ENCODE measurements at regions of chr19 and their contacts with region 1.

Region 1: DNA sequence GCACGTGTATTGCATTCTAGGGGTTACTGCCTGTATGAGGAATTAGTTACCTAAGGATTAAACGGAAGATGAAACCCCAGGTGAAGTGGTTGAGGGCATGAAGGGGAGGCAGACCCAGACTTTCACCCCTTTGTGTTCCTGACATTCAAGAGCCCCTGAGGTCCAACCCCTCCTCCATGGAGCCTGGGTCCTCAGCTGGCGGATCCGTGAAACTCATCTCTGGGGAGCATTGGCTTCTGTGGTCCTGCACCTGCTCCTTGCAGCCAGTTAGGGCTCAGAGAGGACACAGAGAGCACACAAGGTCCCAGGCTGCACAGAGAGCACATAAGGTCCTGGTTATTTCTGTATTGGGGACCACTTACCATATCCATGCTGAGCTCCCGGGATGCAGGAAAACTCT is 7.0 kb upstream of the LILRA1 start:
- DNase-seq: no peak
- H3K4me3 ChIP-seq: no peak overlapping the region
- H3K27ac ChIP-seq: no peak overlapping the region
- H3K4me1 ChIP-seq: no peaks in the 10 kb centered on the region
- H3K27me3 ChIP-seq: no peaks in the 10 kb centered on the region
- CTCF ChIP-seq: no peak
- POLR2A ChIP-seq: no peak

Region 2: GRCh38 chr19:54281007-54281728 is 305.2 kb before region 1 on chr19 and contains the start of gene LILRB2:
- intact Hi-C with region 1: loop called (anchors 5 kb)
- DNase-seq: no peak
- H3K4me3 ChIP-seq: no peak within 1 kb of the TSS
- H3K27ac ChIP-seq: no peak within 1 kb of the TSS
- H3K4me1 ChIP-seq: no peaks in the 10 kb centered on the region
- H3K27me3 ChIP-seq: no peaks in the 10 kb centered on the region
- CTCF ChIP-seq: no peak
- POLR2A ChIP-seq: no peak
- total RNA-seq, gene LILRB2: 0.67 to 2.0 (median 1.1) TPM

Region 3: GRCh38 chr19:54851353-54851752 is 265.0 kb after region 1 on chr19:
- intact Hi-C with region 1: no loop called
- DNase-seq: no peak
- H3K4me3 ChIP-seq: no peak overlapping the region
- H3K27ac ChIP-seq: no peak overlapping the region
- H3K4me1 ChIP-seq: no peaks in the 10 kb centered on the region
- H3K27me3 ChIP-seq: no peaks in the 10 kb centered on the region
- CTCF ChIP-seq: no peak
- POLR2A ChIP-seq: no peak